Panc1 (cell line): ENCODE measurements at regions of chr11 and their contacts with region 1.

Region 1: GRCh38 chr11:77047007-77047927 is 13.1 kb downstream of the B3GNT6 start:
- DNase-seq: peak; percentile 87
- ATAC-seq: peak; percentile 89
- H3K4me3 ChIP-seq: peak overlapping the region; percentile 21 to 67
- H3K27ac ChIP-seq: no peak overlapping the region
- H3K4me1 ChIP-seq: peaks cover 7% of the 10 kb centered on the region
- H3K27me3 ChIP-seq: no peaks in the 10 kb centered on the region
- CTCF ChIP-seq: peak; percentile 69

Region 2: GRCh38 chr11:77091146-77091940 is 44.1 kb after region 1 on chr11:
- CTCF ChIA-PET with region 1: interaction called, 80 read pairs
- POLR2A ChIA-PET with region 1: no interaction called
- in situ Hi-C with region 1: no loop called
- intact Hi-C with region 1: loop called (anchors 1 kb)
- DNase-seq: peak; percentile 50
- ATAC-seq: peak; percentile 87
- H3K4me3 ChIP-seq: no peak overlapping the region
- H3K27ac ChIP-seq: no peak overlapping the region
- H3K4me1 ChIP-seq: peaks cover 18% of the 10 kb centered on the region; the same call in 1 of the 2 replicates
- H3K27me3 ChIP-seq: no peaks in the 10 kb centered on the region
- CTCF ChIP-seq: peak; percentile 99

Region 3: GRCh38 chr11:77121876-77122575 is 74.8 kb after region 1 on chr11:
- CTCF ChIA-PET with region 1: interaction called, 11 read pairs
- POLR2A ChIA-PET with region 1: no interaction called
- in situ Hi-C with region 1: no loop called
- intact Hi-C with region 1: no loop called
- DNase-seq: no peak
- ATAC-seq: no peak
- H3K4me3 ChIP-seq: no peak overlapping the region
- H3K27ac ChIP-seq: no peak overlapping the region
- H3K4me1 ChIP-seq: no peaks in the 10 kb centered on the region
- H3K27me3 ChIP-seq: no peaks in the 10 kb centered on the region
- CTCF ChIP-seq: no peak

Region 4: DNA sequence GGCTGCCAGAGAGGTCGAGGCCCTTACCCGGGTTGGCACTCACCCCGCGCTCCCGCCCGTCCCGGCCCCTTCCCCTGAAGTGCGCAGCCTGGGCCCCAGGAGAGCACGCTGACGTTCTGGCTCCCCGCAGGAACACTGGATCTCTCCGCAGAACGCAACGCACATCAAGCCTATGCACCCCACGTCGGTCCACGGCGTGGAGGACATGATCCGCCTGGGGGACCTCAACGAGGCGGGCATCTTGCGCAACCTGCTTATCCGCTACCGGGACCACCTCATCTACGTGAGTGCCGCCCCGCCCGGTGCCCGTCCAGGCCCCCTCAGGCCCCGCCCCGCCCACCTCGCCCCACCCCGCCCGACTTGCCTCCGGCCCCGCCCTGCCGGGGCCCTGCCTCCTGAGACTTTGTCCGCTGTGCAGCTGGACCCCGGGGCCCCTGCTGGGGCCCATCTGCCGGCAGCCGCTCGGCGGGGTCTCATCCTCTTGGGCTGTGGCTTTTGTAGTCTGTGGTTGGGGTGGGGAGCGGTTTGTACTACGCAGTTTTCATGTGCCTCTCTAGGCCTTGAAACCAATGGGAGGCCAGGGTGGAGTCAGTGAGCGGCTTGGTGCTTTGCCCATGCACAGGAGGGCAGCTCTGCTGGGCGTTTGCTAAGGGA is 100.5 kb after region 1 on chr11:
- CTCF ChIA-PET with region 1: interaction called, 10 read pairs
- POLR2A ChIA-PET with region 1: no interaction called
- in situ Hi-C with region 1: no loop called
- intact Hi-C with region 1: no loop called
- DNase-seq: no peak
- ATAC-seq: peak; percentile 82
- H3K4me3 ChIP-seq: peak overlapping the region in 1 of 2 experiments; percentile 28; a peak in 2 of 4 replicates
- H3K27ac ChIP-seq: no peak overlapping the region
- H3K4me1 ChIP-seq: no peaks in the 10 kb centered on the region
- H3K27me3 ChIP-seq: no peaks in the 10 kb centered on the region
- CTCF ChIP-seq: no peak